GM13977 (cell line): ENCODE measurements at regions of chr15 and their contacts with region 1.

Region 1: GRCh38 chr15:99104788-99105513 is at the start of gene SYNM:
- DNase-seq: peak; percentile 95
- CTCF ChIP-seq: peak; percentile 82

Region 2: GRCh38 chr15:99213187-99213811 is 108.3 kb after region 1 on chr15:
- in situ Hi-C with region 1: loop called (anchors 10 kb)
- DNase-seq: peak; percentile 66
- CTCF ChIP-seq: peak; percentile 82